Activated CD8-positive, alpha-beta memory T cell treated with anti-CD3 and anti-CD28 coated beads, Interleukin-2, amount 10 ng/mL, durations not matched to agents 7 days and 5 days (primary cell): ENCODE measurements at regions of chr1 and their contacts with region 1.

Region 1: DNA sequence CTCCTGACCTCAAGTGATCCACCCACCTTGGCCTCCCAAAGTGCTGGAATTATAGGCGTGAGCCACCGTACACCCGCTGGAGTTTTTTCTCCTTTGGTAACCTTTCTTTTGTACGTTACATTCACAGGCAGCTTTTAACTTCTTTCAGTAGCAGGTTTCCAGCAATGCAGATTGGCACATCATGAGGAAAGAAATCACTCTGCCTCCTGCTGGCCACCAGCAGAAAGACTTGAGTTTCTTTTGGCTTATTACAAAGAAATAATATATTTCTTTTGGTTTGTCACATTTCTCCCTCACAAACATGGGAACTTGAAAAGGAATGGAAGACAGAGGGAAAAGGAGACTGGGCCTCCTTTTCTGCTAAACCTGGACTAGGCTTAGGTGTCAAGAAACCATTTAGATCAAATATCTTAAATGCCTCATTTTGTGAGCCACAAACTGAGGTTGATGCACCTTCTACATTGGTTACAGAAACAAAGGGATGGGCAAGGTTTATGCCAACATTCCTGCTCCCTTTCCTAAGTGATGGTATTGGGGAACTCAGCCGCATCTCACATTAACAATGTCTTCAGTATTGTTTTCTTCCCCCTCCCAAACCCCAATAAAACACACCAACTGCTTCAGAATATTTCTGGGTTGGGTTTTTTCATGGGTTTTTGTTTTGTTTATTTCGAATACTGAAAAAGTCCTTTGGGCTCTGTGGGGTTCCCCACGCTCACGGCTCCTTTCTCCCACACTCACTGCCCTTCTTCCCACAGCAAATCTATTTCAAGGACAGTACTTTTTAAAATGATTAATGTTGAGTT is 7.7 kb downstream of the ENSA start:
- DNase-seq: peak; percentile 74
- ATAC-seq: peak; percentile 50
- H3K4me3 Mint-ChIP-seq: no peak overlapping the region
- H3K27ac Mint-ChIP-seq: peak overlapping the region; percentile 52
- H3K4me1 Mint-ChIP-seq: peaks cover 73% of the 10 kb centered on the region
- H3K27me3 Mint-ChIP-seq: no peaks in the 10 kb centered on the region

Region 2: GRCh38 chr1:150572918-150573647 is 48.6 kb before region 1 on chr1:
- CTCF ChIA-PET with region 1: interaction called, 15 read pairs
- DNase-seq: peak; percentile 40
- ATAC-seq: no peak
- H3K4me3 Mint-ChIP-seq: peak overlapping the region; percentile 99
- H3K27ac Mint-ChIP-seq: peak overlapping the region; percentile 98
- H3K4me1 Mint-ChIP-seq: peaks cover 72% of the 10 kb centered on the region
- H3K27me3 Mint-ChIP-seq: no peaks in the 10 kb centered on the region

Region 3: DNA sequence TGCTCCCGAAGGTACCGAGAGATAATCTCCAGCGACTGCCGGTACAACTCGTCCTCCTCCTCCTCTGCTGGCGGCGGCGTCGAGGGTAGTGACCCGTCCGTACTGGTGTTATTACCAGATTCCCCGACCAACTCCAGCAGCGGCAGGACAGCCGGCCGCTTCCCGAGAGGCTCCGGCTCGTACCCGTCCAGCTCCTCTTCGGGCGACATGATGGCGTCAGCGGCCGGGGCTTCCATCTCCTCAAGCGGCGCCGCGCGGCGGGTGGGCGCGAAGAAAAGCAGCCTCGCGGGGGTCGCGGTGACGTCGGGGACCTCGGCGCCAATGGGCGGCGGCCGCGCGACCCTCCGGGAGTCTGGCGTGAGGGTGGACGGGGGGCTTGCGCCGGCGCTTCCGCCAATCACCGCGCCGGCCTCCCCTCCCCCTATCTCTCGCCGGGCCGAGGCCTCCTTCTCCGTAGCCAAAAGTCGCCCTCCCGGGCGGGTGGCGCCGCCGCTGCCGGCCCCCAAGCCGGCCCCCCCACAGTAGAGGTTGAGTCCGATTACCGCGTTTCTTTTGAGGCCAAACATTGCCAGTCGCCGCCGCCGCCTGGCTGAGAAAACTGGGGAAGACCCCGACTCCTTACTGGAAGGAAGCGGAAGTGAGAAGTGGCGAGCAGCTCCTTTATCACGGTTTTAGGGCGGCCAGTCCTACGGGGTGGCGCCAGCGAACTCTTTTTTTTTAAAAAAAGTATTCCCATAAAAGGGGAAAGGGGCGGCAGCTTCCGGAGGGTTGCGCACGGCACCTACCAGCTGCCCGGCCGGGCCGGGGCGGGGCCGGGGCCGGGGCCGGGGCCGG is 42.5 kb before region 1 on chr1 and contains the start of gene MCL1:
- CTCF ChIA-PET with region 1: interaction called, 12 read pairs
- DNase-seq: peak; percentile 95
- ATAC-seq: peak; percentile 76
- H3K4me3 Mint-ChIP-seq: peak within 1 kb of the TSS; percentile 99
- H3K27ac Mint-ChIP-seq: peak within 1 kb of the TSS; percentile 97
- H3K4me1 Mint-ChIP-seq: peaks cover 32% of the 10 kb centered on the region
- H3K27me3 Mint-ChIP-seq: no peaks in the 10 kb centered on the region
- total RNA-seq, gene MCL1: 373 to 408 TPM

Region 4: GRCh38 chr1:150609732-150610131 is 12.0 kb before region 1 on chr1:
- CTCF ChIA-PET with region 1: interaction called, 21 read pairs
- DNase-seq: no peak
- ATAC-seq: no peak
- H3K4me3 Mint-ChIP-seq: no peak overlapping the region
- H3K27ac Mint-ChIP-seq: peak overlapping the region; percentile 9
- H3K4me1 Mint-ChIP-seq: peaks cover 50% of the 10 kb centered on the region
- H3K27me3 Mint-ChIP-seq: no peaks in the 10 kb centered on the region